ENCODE measurements at regions of chr19 and their contacts with region 1.

Region 1: DNA sequence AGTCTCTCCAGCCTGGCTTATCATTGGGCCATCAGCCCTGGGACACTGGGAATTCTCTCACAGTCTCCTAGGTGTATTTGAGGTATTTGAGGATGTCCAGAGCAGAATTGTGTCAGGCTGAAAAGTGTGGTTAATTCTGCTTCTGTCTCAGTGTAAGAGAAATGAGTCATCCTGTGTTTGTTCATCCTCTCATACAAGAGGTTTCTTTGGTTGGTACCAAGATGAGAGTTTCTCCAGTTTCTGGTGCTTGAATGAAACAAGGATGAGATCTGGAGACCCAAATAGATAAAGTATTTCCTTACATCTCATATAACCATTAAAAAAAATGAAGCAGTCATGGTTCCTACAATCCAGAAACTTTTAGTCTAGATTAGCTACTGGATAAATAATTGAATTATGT is 7.7 kb downstream of the ZNF253 start:
- DNase-seq: no peak
- ATAC-seq: no peak
- H3K4me3 ChIP-seq: no peak overlapping the region
- H3K27ac ChIP-seq: no peak overlapping the region
- H3K4me1 ChIP-seq: no peaks in the 10 kb centered on the region
- H3K27me3 ChIP-seq: no peaks in the 10 kb centered on the region
- CTCF ChIP-seq: no peak

Region 2: DNA sequence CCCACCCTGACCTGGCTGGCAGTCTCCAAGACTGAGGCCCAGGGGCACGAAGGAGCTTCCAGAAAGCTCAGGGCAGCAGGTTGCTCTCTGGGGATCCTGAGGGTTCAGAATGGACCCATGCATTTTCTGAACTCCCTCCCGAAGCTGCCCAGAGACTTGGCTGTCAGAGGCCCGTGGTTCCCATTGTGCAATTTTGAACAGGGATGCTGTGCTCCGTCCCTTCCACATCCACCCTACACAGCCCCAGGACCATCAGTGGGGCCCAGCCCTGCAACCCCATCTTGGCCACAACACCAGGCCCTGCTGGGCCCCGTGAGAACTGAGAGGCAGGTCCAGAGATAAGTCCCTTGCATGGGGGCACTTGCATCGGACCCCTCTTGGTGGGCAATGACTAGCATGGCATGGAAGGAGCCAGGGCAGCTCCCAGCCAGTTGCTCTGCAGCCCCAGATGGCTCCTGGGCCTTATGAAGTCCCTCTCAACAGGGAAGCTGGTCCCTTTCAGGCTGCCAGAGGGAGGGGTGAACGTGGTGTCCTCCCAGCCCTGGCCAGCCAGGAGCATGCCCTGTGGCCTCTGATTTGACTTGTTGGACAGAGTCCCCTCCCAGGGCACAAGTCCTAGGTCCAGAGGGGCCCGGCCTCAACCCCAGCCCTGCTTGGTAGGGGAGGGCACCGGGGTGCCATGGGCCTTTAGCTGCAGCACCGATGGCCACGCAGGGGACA is 123.3 kb before region 1 on chr19:
- CTCF ChIA-PET with region 1: no interaction called
- POLR2A ChIA-PET with region 1: no interaction called
- in situ Hi-C with region 1: no loop called
- intact Hi-C with region 1: no loop called
- DNase-seq: no peak
- ATAC-seq: no peak
- H3K4me3 ChIP-seq: no peak overlapping the region
- H3K27ac ChIP-seq: no peak overlapping the region
- H3K4me1 ChIP-seq: no peaks in the 10 kb centered on the region
- H3K27me3 ChIP-seq: no peaks in the 10 kb centered on the region
- CTCF ChIP-seq: no peak

Region 3: DNA sequence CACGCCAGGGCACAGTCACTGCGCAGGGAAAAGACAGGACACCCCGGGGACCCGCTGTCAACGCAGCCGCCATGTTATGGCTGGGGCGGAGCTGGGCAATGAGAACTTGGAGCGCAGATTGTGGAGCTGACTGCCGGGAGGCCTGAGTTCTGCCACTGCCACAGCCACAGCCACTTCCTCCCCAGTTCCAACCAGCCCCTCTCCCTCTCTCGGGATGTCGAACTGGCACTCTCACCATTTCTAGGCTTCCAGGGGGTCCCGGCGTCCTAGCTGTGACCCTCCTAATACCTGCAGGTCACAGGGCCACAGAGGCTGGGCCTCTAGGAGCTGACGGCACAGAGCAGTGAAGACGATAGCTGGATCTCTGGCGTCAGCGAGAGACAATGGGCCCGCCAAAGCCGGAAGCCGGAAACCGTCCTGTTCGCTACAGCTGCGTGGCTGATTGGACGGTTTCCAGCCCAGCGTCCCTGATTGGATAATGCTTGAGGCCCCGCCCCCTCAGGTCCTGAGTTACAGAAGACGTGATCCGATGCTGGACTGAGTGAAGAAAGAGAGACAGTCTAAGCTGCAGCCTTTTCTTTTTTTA is 51.9 kb before region 1 on chr19 and contains the start of gene ZNF506:
- CTCF ChIA-PET with region 1: no interaction called
- POLR2A ChIA-PET with region 1: interaction called, 13 read pairs
- in situ Hi-C with region 1: no loop called
- intact Hi-C with region 1: no loop called
- DNase-seq: no peak
- ATAC-seq: peak; percentile 99
- H3K4me3 ChIP-seq: peak within 1 kb of the TSS; percentile 59 to 78
- H3K27ac ChIP-seq: peak within 1 kb of the TSS; percentile 79
- H3K4me1 ChIP-seq: no peaks in the 10 kb centered on the region
- H3K27me3 ChIP-seq: no peaks in the 10 kb centered on the region
- CTCF ChIP-seq: no peak
- total RNA-seq, gene ZNF506: 11.4 TPM

Region 4: DNA sequence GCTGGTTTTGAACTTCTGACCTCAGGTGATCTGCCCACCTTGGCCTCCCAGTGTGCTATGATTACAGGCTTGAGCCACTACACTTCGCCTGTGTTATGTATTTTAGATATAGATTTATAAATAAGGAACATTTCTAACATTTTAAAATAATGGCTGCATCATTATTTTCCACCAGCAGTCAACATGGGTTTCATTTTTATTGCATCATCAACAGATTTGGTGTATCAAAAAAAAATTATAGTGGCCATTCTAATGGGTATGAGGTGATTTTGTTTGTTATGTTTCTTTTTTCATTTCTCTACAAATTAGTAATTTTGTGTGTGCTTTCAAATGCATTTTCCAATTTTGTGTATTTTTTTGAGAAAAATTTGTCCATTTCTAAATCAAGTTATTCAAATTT is 11.2 kb after region 1 on chr19:
- CTCF ChIA-PET with region 1: no interaction called
- POLR2A ChIA-PET with region 1: no interaction called
- in situ Hi-C with region 1: no loop called
- intact Hi-C with region 1: no loop called
- DNase-seq: no peak
- ATAC-seq: no peak
- H3K4me3 ChIP-seq: no peak overlapping the region
- H3K27ac ChIP-seq: no peak overlapping the region
- H3K4me1 ChIP-seq: no peaks in the 10 kb centered on the region
- H3K27me3 ChIP-seq: no peaks in the 10 kb centered on the region
- CTCF ChIP-seq: no peak

Measured in Panc1 (cell line).